ENCODE measurements at regions of chr11 and their contacts with region 1.

Region 1: DNA sequence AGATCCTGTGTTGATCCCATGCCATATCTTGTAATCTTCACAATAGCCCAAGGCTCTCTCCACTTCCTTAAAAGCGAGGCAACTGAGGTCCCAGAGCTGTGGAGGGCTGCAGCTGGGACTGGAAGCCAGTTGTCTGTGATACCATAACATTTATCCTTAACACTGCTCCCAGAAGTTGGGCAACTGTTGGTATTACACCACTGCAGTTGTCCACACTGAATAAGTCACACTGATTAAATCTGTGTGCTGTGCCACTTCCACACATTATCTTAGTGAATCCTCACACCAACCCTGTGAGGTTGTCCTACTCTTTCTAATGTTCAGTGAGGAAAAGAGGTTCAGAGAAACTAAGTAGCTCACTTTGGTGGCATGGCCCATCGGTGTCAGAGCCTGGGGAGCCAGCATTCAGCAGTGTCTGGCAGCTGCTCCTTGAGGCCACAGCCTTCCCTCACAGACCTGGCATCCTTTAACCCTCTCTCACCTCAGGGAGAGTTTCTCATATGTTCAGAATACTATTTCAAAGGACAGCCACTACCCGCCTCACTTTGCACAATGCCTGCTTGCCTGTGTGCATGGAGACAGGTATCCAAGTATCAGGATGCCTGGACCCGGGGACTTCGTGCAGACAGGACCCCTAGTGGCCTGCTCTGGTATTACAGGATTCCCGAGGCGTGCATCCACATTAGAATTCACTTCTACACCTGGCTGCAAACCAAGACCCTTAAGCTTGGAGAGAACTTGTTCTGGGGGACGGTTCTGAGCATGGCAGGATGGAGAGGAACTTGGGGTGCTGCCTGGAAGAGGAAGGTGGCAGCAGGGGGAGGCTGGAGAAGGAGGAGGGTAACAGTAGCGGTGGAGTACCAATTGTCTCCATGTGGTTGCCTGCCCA is 221.9 kb upstream of the TBCEL start:
- DNase-seq: peak; percentile 28
- ATAC-seq: peak; percentile 87
- H3K4me3 ChIP-seq: no peak overlapping the region
- H3K27ac ChIP-seq: no peak overlapping the region
- H3K4me1 ChIP-seq: peaks cover 21% of the 10 kb centered on the region
- H3K27me3 ChIP-seq: 0 out of 5 replicates have a peak, but pooled peaks cover 0 to 2% of the 10 kb centered on the region in 2 experiments
- CTCF ChIP-seq: peak; percentile 83
- EP300 ChIP-seq: no peak
- POLR2A ChIP-seq: no peak
- RAD21 ChIP-seq: peak; percentile 25; the same call in 1 of the 2 replicates

Region 2: GRCh38 chr11:120645639-120646038 is 156.4 kb before region 1 on chr11:
- CTCF ChIA-PET with region 1: no interaction called
- POLR2A ChIA-PET with region 1: no interaction called
- in situ Hi-C with region 1: no loop called
- intact Hi-C with region 1: no loop called
- DNase-seq: no peak
- ATAC-seq: no peak
- H3K4me3 ChIP-seq: no peak overlapping the region
- H3K27ac ChIP-seq: no peak overlapping the region
- H3K4me1 ChIP-seq: no peaks in the 10 kb centered on the region
- H3K27me3 ChIP-seq: peaks cover 0 to 21% of the 10 kb centered on the region in 2 experiments; a peak in 3 of 5 replicates
- CTCF ChIP-seq: no peak
- EP300 ChIP-seq: no peak
- POLR2A ChIP-seq: no peak
- RAD21 ChIP-seq: no peak

Region 3: GRCh38 chr11:120660024-120660565 is 141.9 kb before region 1 on chr11:
- CTCF ChIA-PET with region 1: no interaction called
- POLR2A ChIA-PET with region 1: no interaction called
- in situ Hi-C with region 1: no loop called
- intact Hi-C with region 1: loop called (anchors 1 kb)
- DNase-seq: peak; percentile 53
- ATAC-seq: peak; percentile 83
- H3K4me3 ChIP-seq: no peak overlapping the region
- H3K27ac ChIP-seq: no peak overlapping the region
- H3K4me1 ChIP-seq: 0 out of 2 replicates have a peak, but pooled peaks cover 4% of the 10 kb centered on the region
- H3K27me3 ChIP-seq: no peaks in the 10 kb centered on the region; a peak in 3 of 5 replicates
- CTCF ChIP-seq: peak; percentile 74
- EP300 ChIP-seq: no peak
- POLR2A ChIP-seq: no peak
- RAD21 ChIP-seq: peak; percentile 73

Region 4: GRCh38 chr11:120786206-120786735 is 15.8 kb before region 1 on chr11:
- CTCF ChIA-PET with region 1: no interaction called
- POLR2A ChIA-PET with region 1: no interaction called
- in situ Hi-C with region 1: no loop called
- intact Hi-C with region 1: no loop called
- DNase-seq: no peak
- ATAC-seq: no peak
- H3K4me3 ChIP-seq: no peak overlapping the region
- H3K27ac ChIP-seq: no peak overlapping the region
- H3K4me1 ChIP-seq: no peaks in the 10 kb centered on the region
- H3K27me3 ChIP-seq: peaks cover 0 to 19% of the 10 kb centered on the region in 2 experiments; a peak in 1 of 5 replicates
- CTCF ChIP-seq: no peak
- EP300 ChIP-seq: no peak
- POLR2A ChIP-seq: no peak
- RAD21 ChIP-seq: no peak